ENCODE measurements at regions of chr5 and their contacts with region 1.

Region 1: GRCh38 chr5:35926389-35927051 is 11.9 kb downstream of the CAPSL start:
- DNase-seq: no peak
- H3K4me3 ChIP-seq: no peak overlapping the region
- H3K27ac ChIP-seq: no peak overlapping the region
- H3K4me1 ChIP-seq: peaks cover 0 to 7% (median 1%) of the 10 kb centered on the region in 4 donors
- H3K27me3 ChIP-seq: peaks cover 0 to 28% (median 0%) of the 10 kb centered on the region in 3 donors
- CTCF ChIP-seq: peak; percentile 23 to 83 (median 69)
- EP300 ChIP-seq: no peak
- POLR2A ChIP-seq: no peak

Region 2: DNA sequence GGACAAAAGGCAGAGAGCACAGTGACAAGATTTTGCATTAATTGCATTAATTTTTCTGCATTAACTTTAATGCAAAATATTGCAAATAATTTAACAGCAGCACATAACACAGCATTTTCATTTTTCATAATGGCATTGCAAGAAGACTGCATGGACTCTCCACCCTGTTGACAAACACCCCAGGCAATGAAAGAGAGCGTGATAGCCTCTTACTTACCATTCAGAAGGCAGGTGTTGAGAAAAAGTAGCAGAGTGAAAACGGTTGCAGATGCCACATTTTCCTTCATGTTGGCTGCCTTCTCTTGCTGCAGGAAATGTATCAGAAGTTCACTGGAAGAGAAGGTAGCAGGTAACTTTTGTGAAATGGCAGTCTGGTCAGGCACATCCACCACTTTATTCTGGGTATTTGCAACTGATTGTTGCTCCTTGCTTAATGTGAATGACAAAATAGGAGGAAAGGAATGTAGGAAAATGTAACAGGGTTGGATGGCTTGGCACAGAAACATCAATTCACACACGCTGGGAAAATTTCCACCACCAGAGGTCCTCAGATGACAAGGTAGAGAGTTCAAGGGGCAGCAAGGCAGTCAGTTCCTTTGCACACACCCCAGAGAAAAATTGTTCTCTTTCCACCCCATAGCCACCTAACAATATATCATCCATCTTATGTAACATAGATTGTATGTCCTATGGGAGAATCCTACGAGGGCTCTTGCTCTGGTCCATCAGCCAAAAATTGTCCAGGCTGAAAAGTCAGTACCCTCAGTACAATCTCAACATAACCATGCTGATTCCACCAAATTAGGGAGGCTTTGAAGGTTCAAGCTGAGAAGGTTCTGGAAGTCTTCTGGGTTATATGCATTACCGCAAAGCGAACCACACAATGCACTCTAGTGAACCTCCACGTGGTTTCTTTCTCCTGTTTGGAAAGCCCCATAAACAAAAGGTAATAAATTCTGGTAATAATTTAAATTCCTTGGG is 836.9 kb before region 1 on chr5:
- intact Hi-C with region 1: loop called (anchors 5 kb)
- DNase-seq: no peak
- H3K4me3 ChIP-seq: no peak overlapping the region
- H3K27ac ChIP-seq: no peak overlapping the region
- H3K4me1 ChIP-seq: no peaks in the 10 kb centered on the region
- H3K27me3 ChIP-seq: no peaks in the 10 kb centered on the region
- CTCF ChIP-seq: peak in 3 of 4 experiments; percentile 41 to 62 (median 48)
- EP300 ChIP-seq: no peak
- POLR2A ChIP-seq: no peak

Region 3: GRCh38 chr5:35617435-35618303 is 308.9 kb before region 1 on chr5 and contains the start of gene SPEF2:
- intact Hi-C with region 1: loop called (anchors 5 kb)
- DNase-seq: peak; percentile 87
- H3K4me3 ChIP-seq: peak within 1 kb of the TSS; percentile 59 to 80 (median 72)
- H3K27ac ChIP-seq: peak within 1 kb of the TSS in 1 of 4 donors; percentile 19
- H3K4me1 ChIP-seq: peaks cover 0 to 11% (median 4%) of the 10 kb centered on the region in 4 donors
- H3K27me3 ChIP-seq: no peaks in the 10 kb centered on the region
- CTCF ChIP-seq: peak; percentile 39 to 63 (median 54)
- EP300 ChIP-seq: no peak
- POLR2A ChIP-seq: no peak
- total RNA-seq, gene SPEF2: 2.6 to 5.5 (median 4.1) TPM

Region 4: DNA sequence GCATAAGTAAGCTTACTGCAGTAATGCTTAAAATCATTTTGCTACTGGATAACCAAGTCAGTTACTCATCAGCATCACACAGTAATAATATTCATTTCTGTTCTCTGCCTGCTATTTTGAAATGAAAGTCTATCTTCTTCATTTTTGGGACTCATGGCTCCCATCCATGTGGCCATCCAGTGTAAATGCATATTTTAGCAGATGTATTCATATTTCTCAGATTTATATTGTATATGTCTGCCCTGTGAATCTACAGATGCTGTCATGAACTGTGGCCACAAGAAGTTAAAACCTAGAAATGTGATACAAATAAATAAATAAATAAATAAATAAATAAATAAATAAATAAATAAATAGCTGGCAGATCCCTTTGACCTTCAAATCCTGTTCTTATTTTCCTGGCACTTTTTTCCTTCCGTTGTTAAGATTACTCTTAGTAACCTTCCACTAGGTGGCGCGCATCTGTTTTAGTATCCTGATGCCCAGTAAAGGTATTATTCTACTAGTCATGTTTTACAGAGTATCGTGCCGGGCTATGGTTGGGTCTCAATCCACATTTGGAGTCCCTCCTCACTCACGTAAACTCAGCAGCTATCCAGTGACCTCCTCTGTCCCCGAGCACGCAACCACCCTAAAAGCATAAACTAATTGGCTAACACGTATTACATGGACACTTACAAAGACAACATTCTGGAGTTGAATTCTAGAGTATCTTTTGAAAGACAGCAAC is 149.0 kb before region 1 on chr5:
- intact Hi-C with region 1: loop called (anchors 5 kb)
- DNase-seq: peak; percentile 65
- H3K4me3 ChIP-seq: no peak overlapping the region
- H3K27ac ChIP-seq: no peak overlapping the region
- H3K4me1 ChIP-seq: no peaks in the 10 kb centered on the region
- H3K27me3 ChIP-seq: no peaks in the 10 kb centered on the region
- CTCF ChIP-seq: peak in 2 of 4 experiments; percentile 28 to 42
- EP300 ChIP-seq: no peak
- POLR2A ChIP-seq: no peak

Measured in sigmoid colon (tissue), 7 donors.